Aorta (tissue), 5 donors: ENCODE measurements at regions of chr3 and their contacts with region 1.

Region 1: DNA sequence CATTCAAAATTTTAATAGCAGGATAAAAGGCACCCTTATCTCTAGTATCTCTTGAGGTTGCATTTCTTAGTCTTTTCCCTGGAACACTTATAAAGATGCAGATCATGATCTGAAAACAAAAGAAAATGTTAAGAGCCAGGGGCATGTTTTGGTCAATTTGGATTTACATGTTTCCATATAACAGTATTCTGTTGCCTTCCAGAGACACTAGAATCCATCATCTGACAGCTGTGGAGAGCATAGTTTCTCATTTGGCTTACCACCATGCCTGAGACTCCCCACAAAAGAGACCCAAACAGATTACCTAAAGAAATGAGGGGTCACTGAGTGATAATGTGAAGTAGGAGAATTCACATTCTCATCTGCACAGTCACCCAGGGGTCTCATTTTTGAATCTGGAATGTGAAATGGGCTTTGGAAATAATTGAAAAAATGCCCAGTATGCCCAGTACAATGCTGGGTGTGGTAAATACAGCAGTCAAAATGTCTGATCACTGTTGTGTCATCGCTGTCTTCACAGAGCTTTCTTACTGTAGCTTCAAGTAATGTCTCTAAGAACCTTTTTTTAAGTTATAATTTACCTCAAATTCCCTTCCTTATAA is 79.9 kb upstream of the ZBTB20 start:
- DNase-seq: no peak
- ATAC-seq: no peak
- H3K4me3 ChIP-seq: no peak overlapping the region
- H3K27ac ChIP-seq: no peak overlapping the region
- H3K4me1 ChIP-seq: no peaks in the 10 kb centered on the region
- H3K27me3 ChIP-seq: no peaks in the 10 kb centered on the region

Region 2: GRCh38 chr3:114732353-114732752 is 494.6 kb before region 1 on chr3:
- intact Hi-C with region 1: no loop called
- DNase-seq: no peak
- ATAC-seq: no peak
- H3K4me3 ChIP-seq: no peak overlapping the region
- H3K27ac ChIP-seq: no peak overlapping the region
- H3K4me1 ChIP-seq: no peaks in the 10 kb centered on the region
- H3K27me3 ChIP-seq: no peaks in the 10 kb centered on the region

Region 3: GRCh38 chr3:115436767-115437301 is 209.9 kb after region 1 on chr3:
- intact Hi-C with region 1: loop called in 1 of 2 experiments (anchors 10 kb)
- DNase-seq: peak in 1 of 2 donors; percentile 53
- ATAC-seq: peak; percentile 55
- H3K4me3 ChIP-seq: no peak overlapping the region
- H3K27ac ChIP-seq: no peak overlapping the region
- H3K4me1 ChIP-seq: no peaks in the 10 kb centered on the region
- H3K27me3 ChIP-seq: no peaks in the 10 kb centered on the region